Activated CD8-positive, alpha-beta T cell treated with anti-CD3 and anti-CD28 coated beads, Interleukin-2, amount 10 ng/mL, durations not matched to agents 7 days and 5 days (primary cell): ENCODE measurements at regions of chr4 and their contacts with region 1.

Region 1: DNA sequence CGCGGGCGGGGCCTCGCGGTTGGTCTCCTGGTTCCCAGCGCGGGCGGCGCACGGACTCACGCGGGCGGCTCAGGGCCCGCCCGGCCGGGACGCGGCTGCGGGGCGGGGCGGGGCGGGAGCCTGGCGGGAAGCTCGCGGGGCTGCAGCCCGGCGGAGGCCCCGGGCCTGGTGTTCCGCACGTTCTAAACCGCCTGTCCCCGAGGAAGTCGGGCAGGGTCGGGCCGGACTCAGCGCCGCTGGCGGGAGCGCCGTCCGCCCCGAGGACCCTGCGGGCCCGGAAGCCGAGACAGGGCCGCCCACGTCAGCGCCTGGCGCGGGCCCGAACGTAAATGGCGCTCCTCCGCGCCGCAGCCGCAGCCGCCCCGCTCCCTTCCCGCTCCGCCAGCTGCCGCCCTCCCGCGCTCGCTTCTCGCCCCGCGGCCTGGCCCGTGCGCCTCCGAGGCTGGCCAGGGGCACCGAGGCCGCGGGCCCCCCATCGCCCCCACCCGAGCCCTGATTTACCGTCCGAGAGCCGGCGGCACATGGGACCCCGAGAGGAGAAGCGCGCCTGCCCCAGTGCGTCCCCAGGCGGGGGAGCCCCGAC is 309 bp upstream of the CTBP1 start:
- DNase-seq: peak; percentile 83
- ATAC-seq: peak; percentile 64
- H3K4me3 Mint-ChIP-seq: peak overlapping the region; percentile 86
- H3K27ac Mint-ChIP-seq: peak overlapping the region; percentile 95
- H3K4me1 Mint-ChIP-seq: peaks cover 66% of the 10 kb centered on the region
- H3K27me3 Mint-ChIP-seq: no peaks in the 10 kb centered on the region

Region 2: GRCh38 chr4:1137063-1137776 is 112.0 kb before region 1 on chr4:
- CTCF ChIA-PET with region 1: interaction called, 4 read pairs
- POLR2A ChIA-PET with region 1: interaction called, 14 read pairs
- DNase-seq: no peak
- ATAC-seq: peak; percentile 64
- H3K4me3 Mint-ChIP-seq: peak overlapping the region; percentile 68
- H3K27ac Mint-ChIP-seq: peak overlapping the region; percentile 78
- H3K4me1 Mint-ChIP-seq: peaks cover 23% of the 10 kb centered on the region
- H3K27me3 Mint-ChIP-seq: peaks cover 12% of the 10 kb centered on the region

Region 3: DNA sequence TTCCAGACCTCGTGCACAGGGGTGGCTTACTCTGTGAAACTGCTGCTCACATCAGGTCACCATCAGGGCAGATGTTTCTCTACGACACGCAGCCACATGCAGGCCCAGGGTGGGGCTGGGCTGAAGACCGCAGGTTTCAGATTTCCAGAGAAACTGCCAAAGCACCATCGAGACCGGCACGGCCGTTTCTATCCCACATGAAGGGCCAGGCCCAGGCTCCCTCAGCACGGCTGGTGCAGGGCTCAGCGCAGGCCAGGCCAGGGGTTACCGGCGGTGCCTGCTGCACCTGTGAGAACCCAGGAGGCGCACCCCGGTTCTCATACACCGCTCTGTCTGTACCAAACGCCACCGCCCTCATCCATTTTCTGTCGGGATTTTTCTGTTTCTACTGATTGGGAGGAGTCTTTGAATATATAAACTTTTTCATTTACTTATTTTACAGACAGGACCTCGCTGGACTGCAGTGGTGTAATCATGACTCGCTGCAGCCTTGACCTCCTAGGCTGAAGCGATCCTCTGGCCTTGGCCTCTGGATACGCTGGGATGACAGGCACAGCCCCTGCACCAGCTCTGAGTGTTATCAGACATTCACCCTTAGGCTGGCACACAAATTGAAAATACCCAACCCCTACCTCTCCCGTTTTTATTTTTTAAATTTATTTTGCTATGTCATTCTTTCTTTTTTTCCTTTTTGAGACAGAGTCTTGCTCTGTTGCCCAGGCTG is 17.4 kb before region 1 on chr4:
- CTCF ChIA-PET with region 1: no interaction called
- POLR2A ChIA-PET with region 1: no interaction called
- DNase-seq: no peak
- ATAC-seq: no peak
- H3K4me3 Mint-ChIP-seq: no peak overlapping the region
- H3K27ac Mint-ChIP-seq: peak overlapping the region; percentile 39
- H3K4me1 Mint-ChIP-seq: peaks cover 7% of the 10 kb centered on the region
- H3K27me3 Mint-ChIP-seq: no peaks in the 10 kb centered on the region

Region 4: DNA sequence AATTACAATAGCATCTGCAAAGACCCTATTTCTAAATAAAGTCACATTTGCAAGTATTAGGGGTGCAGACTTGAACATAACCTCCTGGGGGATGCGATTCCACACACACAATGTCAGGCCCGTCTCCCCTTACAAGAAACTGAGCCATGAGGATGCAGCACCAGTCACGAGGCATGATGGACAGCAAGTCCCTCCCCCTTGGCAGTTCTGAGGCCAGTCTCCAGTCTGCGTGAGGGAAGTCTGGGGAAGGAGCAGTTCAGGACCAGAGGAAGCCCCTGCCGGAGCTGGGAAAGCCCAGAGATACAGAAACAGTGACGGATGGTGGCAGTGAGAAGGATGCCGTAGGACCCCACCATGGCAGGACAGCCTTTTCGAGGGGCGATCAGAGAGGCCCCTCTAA is 425.4 kb after region 1 on chr4:
- CTCF ChIA-PET with region 1: no interaction called
- POLR2A ChIA-PET with region 1: no interaction called
- DNase-seq: no peak
- ATAC-seq: no peak
- H3K4me3 Mint-ChIP-seq: no peak overlapping the region
- H3K27ac Mint-ChIP-seq: no peak overlapping the region
- H3K4me1 Mint-ChIP-seq: peaks cover 5% of the 10 kb centered on the region
- H3K27me3 Mint-ChIP-seq: no peaks in the 10 kb centered on the region

Region 5: GRCh38 chr4:1899149-1900086 is 650.2 kb after region 1 on chr4:
- CTCF ChIA-PET with region 1: no interaction called
- POLR2A ChIA-PET with region 1: no interaction called
- DNase-seq: peak; percentile 85
- ATAC-seq: peak; percentile 94
- H3K4me3 Mint-ChIP-seq: no peak overlapping the region
- H3K27ac Mint-ChIP-seq: peak overlapping the region; percentile 79
- H3K4me1 Mint-ChIP-seq: peaks cover 72% of the 10 kb centered on the region
- H3K27me3 Mint-ChIP-seq: no peaks in the 10 kb centered on the region